Pancreas (tissue), 10 donors: ENCODE measurements at regions of chr7 and their contacts with region 1.

Region 1: DNA sequence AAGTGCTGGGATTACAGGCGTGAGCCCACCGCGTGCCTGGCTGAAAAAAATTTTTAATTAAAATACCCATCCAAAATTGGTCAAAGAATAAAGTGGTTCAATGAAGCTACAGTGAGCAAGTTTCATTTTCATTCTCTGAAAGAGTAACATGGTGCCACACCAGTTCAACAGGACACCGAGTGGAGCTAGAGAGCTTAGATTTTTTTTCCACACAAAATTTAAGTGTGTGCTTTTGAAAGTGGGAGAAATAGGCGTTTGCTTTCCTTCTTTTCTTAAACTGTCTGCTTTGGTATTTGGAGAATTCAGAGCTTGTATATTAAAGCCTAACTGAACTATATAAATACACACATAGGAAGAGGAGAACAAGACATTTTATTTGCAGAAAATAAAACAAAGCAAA is 43.4 kb downstream of the BPGM start:
- DNase-seq: no peak
- ATAC-seq: peak in 3 of 4 donors; percentile 66 to 74 (median 69)
- H3K4me3 ChIP-seq: no peak overlapping the region
- H3K27ac ChIP-seq: no peak overlapping the region
- H3K4me1 ChIP-seq: no peaks in the 10 kb centered on the region
- H3K27me3 ChIP-seq: peaks cover 0 to 3% (median 0%) of the 10 kb centered on the region in 4 donors
- CTCF ChIP-seq: peak in 1 of 4 donors; percentile 12

Region 2: GRCh38 chr7:134943764-134944400 is 253.9 kb after region 1 on chr7:
- intact Hi-C with region 1: loop called in 1 of 3 experiments (anchors 10 kb)
- DNase-seq: no peak
- ATAC-seq: peak; percentile 65 to 86 (median 76)
- H3K4me3 ChIP-seq: no peak overlapping the region
- H3K27ac ChIP-seq: no peak overlapping the region
- H3K4me1 ChIP-seq: peaks cover 5 to 24% (median 18%) of the 10 kb centered on the region in 3 donors
- H3K27me3 ChIP-seq: no peaks in the 10 kb centered on the region
- CTCF ChIP-seq: peak in 1 of 4 donors; percentile 8